SK-N-SH (cell line): ENCODE measurements at regions of chr3 and their contacts with region 1.

Region 1: GRCh38 chr3:113495035-113495434 is 19.9 kb downstream of the SPICE1 start:
- DNase-seq: no peak
- H3K4me3 ChIP-seq: no peak overlapping the region
- H3K27ac ChIP-seq: no peak overlapping the region
- H3K4me1 ChIP-seq: no peaks in the 10 kb centered on the region
- H3K27me3 ChIP-seq: no peaks in the 10 kb centered on the region
- CTCF ChIP-seq: peak; percentile 59
- EP300 ChIP-seq: no peak
- RAD21 ChIP-seq: peak; percentile 61

Region 2: GRCh38 chr3:113514265-113514769 is 19.3 kb after region 1 on chr3:
- CTCF ChIA-PET with region 1: interaction called, 16 read pairs
- POLR2A ChIA-PET with region 1: interaction called, 3 read pairs
- DNase-seq: no peak
- H3K4me3 ChIP-seq: peak overlapping the region; percentile 76 to 89
- H3K27ac ChIP-seq: peak overlapping the region; percentile 83 to 89
- H3K4me1 ChIP-seq: peaks cover 3 to 5% of the 10 kb centered on the region in 2 experiments; a peak in 3 of 4 replicates
- H3K27me3 ChIP-seq: no peaks in the 10 kb centered on the region
- CTCF ChIP-seq: no peak
- EP300 ChIP-seq: no peak
- RAD21 ChIP-seq: no peak

Region 3: GRCh38 chr3:113552851-113553250 is 57.8 kb after region 1 on chr3:
- CTCF ChIA-PET with region 1: interaction called, 10 read pairs
- POLR2A ChIA-PET with region 1: no interaction called
- DNase-seq: no peak
- H3K4me3 ChIP-seq: no peak overlapping the region
- H3K27ac ChIP-seq: no peak overlapping the region
- H3K4me1 ChIP-seq: no peaks in the 10 kb centered on the region
- H3K27me3 ChIP-seq: no peaks in the 10 kb centered on the region
- CTCF ChIP-seq: no peak
- EP300 ChIP-seq: no peak
- RAD21 ChIP-seq: no peak

Region 4: DNA sequence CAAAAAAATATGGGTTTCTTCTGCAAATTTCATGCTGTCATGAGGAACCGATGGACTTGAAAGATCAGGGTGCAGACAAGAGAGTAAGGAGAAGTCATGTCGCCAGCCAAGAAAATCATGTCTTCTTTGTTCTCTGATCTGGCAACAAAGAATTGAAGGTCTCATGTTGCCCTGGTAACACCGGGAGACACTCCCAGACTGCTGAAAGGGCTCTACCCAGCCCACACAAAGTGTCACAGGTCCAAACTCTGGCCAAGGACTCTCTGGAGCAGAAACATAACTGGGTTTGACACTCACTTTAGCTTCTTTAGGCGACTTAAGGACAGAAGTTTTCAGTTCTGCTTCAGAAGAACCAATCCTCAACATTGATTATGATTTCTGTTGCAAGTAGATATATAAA is 80.2 kb after region 1 on chr3:
- CTCF ChIA-PET with region 1: interaction called, 62 read pairs
- POLR2A ChIA-PET with region 1: no interaction called
- DNase-seq: no peak
- H3K4me3 ChIP-seq: no peak overlapping the region
- H3K27ac ChIP-seq: no peak overlapping the region
- H3K4me1 ChIP-seq: no peaks in the 10 kb centered on the region
- H3K27me3 ChIP-seq: peaks cover 5% of the 10 kb centered on the region; the same call in 1 of the 2 replicates
- CTCF ChIP-seq: no peak
- EP300 ChIP-seq: no peak
- RAD21 ChIP-seq: no peak

Region 5: GRCh38 chr3:113626503-113627371 is 131.7 kb after region 1 on chr3:
- CTCF ChIA-PET with region 1: interaction called, 16 read pairs
- POLR2A ChIA-PET with region 1: no interaction called
- DNase-seq: peak; percentile 73
- H3K4me3 ChIP-seq: no peak overlapping the region
- H3K27ac ChIP-seq: no peak overlapping the region
- H3K4me1 ChIP-seq: no peaks in the 10 kb centered on the region
- H3K27me3 ChIP-seq: no peaks in the 10 kb centered on the region
- CTCF ChIP-seq: peak; percentile 77
- EP300 ChIP-seq: no peak
- RAD21 ChIP-seq: peak; percentile 89

Region 6: GRCh38 chr3:113643581-113643980 is 148.5 kb after region 1 on chr3:
- CTCF ChIA-PET with region 1: no interaction called
- POLR2A ChIA-PET with region 1: no interaction called
- DNase-seq: no peak
- H3K4me3 ChIP-seq: no peak overlapping the region
- H3K27ac ChIP-seq: no peak overlapping the region
- H3K4me1 ChIP-seq: no peaks in the 10 kb centered on the region
- H3K27me3 ChIP-seq: no peaks in the 10 kb centered on the region
- CTCF ChIP-seq: no peak
- EP300 ChIP-seq: no peak
- RAD21 ChIP-seq: no peak